Activated T-helper 1 cell treated with anti-CD3 and anti-CD28 coated beads, Interleukin-12 subunit alpha, Interleukin-12 subunit beta, Interleukin-2, Interleukin-4 antibody, amounts not matched to agents 30 ng/mL and 10 ng/mL and 1 ng/mL, durations not matched to agents 14 hours and 24 hours and 36 hours (primary cell): ENCODE measurements at regions of chr21 and their contacts with region 1.

Region 1: DNA sequence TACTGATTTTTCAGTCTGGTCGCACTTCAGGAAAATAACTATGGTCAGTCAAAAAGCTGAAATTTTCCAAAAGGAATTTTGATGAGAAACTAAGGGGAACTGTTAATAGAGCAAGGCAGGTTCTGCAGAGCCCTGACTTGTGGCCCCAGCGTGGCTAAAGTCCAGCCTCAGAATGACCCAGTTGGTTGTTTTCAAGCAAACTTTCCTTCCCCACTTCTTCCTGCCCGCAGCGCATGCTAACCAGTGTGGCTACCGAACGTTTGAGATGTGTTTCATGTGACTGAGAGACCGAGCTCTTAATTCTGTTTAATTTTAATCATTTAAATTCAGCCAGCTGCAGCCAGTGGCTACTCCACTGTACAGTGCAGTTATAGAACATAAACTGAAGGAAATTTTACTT is 6.2 kb upstream of the IL10RB start:
- DNase-seq: no peak
- H3K4me3 Mint-ChIP-seq: no peak overlapping the region
- H3K27ac Mint-ChIP-seq: no peak overlapping the region
- H3K4me1 Mint-ChIP-seq: peaks cover 47% of the 10 kb centered on the region
- H3K27me3 Mint-ChIP-seq: no peaks in the 10 kb centered on the region

Region 2: GRCh38 chr21:33238565-33239255 is 21.3 kb before region 1 on chr21:
- intact Hi-C with region 1: loop called (anchors 2 kb)
- DNase-seq: no peak
- H3K4me3 Mint-ChIP-seq: peak overlapping the region; percentile 51
- H3K27ac Mint-ChIP-seq: peak overlapping the region; percentile 91
- H3K4me1 Mint-ChIP-seq: peaks cover 66% of the 10 kb centered on the region
- H3K27me3 Mint-ChIP-seq: no peaks in the 10 kb centered on the region

Region 3: GRCh38 chr21:33244082-33244778 is 15.8 kb before region 1 on chr21:
- intact Hi-C with region 1: loop called (anchors 1 kb)
- DNase-seq: no peak
- H3K4me3 Mint-ChIP-seq: peak overlapping the region; percentile 64
- H3K27ac Mint-ChIP-seq: peak overlapping the region; percentile 90
- H3K4me1 Mint-ChIP-seq: peaks cover 72% of the 10 kb centered on the region
- H3K27me3 Mint-ChIP-seq: no peaks in the 10 kb centered on the region